ENCODE measurements at regions of chr1 and their contacts with region 1.

Region 1: GRCh38 chr1:173986951-173987350 is 35.2 kb downstream of the RC3H1 start:
- DNase-seq: no peak
- H3K4me3 ChIP-seq: no peak overlapping the region
- H3K27ac ChIP-seq: no peak overlapping the region
- H3K4me1 ChIP-seq: no peaks in the 10 kb centered on the region
- H3K27me3 ChIP-seq: no peaks in the 10 kb centered on the region
- CTCF ChIP-seq: no peak

Region 2: DNA sequence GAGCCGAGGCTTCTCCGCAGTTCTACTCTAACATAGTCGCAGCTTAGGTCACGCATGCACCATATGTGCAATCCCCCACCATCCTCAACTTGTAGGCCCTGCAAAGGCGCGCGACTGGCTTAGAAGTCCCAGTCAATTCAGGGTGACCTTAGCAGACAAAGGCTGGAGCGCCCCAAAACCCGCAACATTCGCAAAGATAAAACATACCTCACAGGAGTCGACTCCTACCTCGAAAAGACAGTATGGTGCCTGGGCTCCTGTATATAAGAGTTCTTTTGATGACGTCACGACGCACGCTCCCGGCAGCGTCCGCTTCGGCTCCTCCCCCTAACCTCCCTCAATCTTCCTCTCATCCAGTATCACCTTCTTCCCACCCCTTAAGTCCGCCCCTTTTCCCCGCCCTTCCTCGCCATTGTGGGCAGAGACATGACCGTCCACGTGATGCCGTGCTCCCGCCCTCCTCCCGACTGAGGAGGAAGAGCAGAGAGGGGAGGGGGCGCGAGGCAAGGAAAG is 119.1 kb before region 1 on chr1 and contains the start of gene GAS5:
- intact Hi-C with region 1: no loop called
- DNase-seq: peak; percentile 99 to 100
- H3K4me3 ChIP-seq: peak within 1 kb of the TSS; percentile 85 to 97
- H3K27ac ChIP-seq: peak within 1 kb of the TSS; percentile 93 to 99
- H3K4me1 ChIP-seq: peaks cover 4 to 10% of the 10 kb centered on the region in 2 donors
- H3K27me3 ChIP-seq: no peaks in the 10 kb centered on the region
- CTCF ChIP-seq: no peak
- total RNA-seq, gene GAS5: 149 TPM

Region 3: GRCh38 chr1:173960625-173961024 is 26.3 kb before region 1 on chr1:
- intact Hi-C with region 1: no loop called
- DNase-seq: no peak
- H3K4me3 ChIP-seq: no peak overlapping the region
- H3K27ac ChIP-seq: no peak overlapping the region
- H3K4me1 ChIP-seq: no peaks in the 10 kb centered on the region
- H3K27me3 ChIP-seq: no peaks in the 10 kb centered on the region
- CTCF ChIP-seq: no peak

Region 4: DNA sequence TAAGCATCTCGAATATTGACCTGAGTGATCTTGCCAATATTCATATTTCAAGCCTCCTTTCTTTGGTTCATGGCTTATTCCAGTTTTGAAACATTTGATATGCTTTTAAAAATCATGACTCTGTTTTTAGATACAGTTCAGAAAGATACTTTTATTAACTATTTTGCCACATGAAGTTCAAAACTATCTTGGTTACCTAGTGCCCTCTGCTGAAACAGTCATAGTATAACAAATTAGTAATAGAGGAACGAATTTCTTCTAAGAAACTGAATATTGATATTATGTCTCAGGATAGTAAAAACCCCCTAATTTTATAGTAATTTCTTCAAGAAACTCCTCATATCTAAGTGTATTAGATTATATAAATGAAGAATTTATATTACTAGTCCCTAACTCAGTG is 87.8 kb after region 1 on chr1:
- intact Hi-C with region 1: loop called (anchors 10 kb)
- DNase-seq: no peak
- H3K4me3 ChIP-seq: no peak overlapping the region
- H3K27ac ChIP-seq: no peak overlapping the region
- H3K4me1 ChIP-seq: no peaks in the 10 kb centered on the region
- H3K27me3 ChIP-seq: no peaks in the 10 kb centered on the region
- CTCF ChIP-seq: peak in 1 of 3 experiments; percentile 35

Measured in ascending aorta (tissue), 2 donors.